Body of pancreas (tissue), 4 donors: ENCODE measurements at regions of chr19 and their contacts with region 1.

Region 1: GRCh38 chr19:46288896-46289588 is 7.8 kb upstream of the HIF3A start:
- DNase-seq: peak in 1 of 4 donors; percentile 33
- ATAC-seq: peak; percentile 42
- H3K4me3 ChIP-seq: no peak overlapping the region
- H3K27ac ChIP-seq: peak overlapping the region in 2 of 4 donors; percentile 3 to 24
- H3K4me1 ChIP-seq: no peaks in the 10 kb centered on the region
- H3K27me3 ChIP-seq: no peaks in the 10 kb centered on the region
- CTCF ChIP-seq: no peak
- POLR2A ChIP-seq: no peak

Region 2: GRCh38 chr19:46346821-46347571 is 58.0 kb after region 1 on chr19 and contains the start of gene PPP5C:
- intact Hi-C with region 1: loop called (anchors 10 kb)
- DNase-seq: peak; percentile 92 to 96 (median 96)
- ATAC-seq: peak; percentile 93
- H3K4me3 ChIP-seq: peak within 1 kb of the TSS; percentile 93 to 96
- H3K27ac ChIP-seq: peak within 1 kb of the TSS; percentile 82 to 90 (median 86)
- H3K4me1 ChIP-seq: peaks cover 52% of the 10 kb centered on the region
- H3K27me3 ChIP-seq: no peaks in the 10 kb centered on the region
- CTCF ChIP-seq: peak; percentile 22 to 93 (median 63)
- POLR2A ChIP-seq: peak; percentile 61 to 84 (median 83)
- total RNA-seq, gene PPP5C: 31.1 to 77.5 TPM

Region 3: DNA sequence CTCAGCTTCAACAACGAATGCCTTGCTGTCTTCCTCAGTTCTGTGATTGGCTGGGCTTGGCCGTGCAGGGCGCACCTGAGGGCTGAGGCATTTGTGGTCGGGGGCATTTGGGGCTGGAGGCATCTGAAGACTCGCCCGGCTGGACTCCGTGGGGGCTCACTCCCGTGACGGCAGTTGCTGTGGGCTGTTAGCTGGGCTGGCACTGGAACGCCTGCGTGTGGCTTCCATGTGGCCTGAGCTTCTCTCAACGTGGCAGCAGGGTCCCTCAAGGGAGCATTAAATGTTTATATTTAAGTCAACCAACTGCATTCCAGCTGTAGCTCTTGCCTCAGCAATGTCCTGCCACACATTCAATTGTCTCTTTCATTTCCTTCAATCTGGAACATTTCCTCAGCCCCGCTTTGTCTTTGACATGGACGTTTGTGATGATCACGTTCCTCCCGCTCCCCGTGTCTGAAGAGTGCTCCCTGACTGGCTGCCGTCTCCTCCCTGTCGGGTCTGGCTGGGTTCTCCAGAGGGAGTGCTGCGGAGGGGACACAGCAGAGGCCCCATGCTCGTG is 103.3 kb after region 1 on chr19:
- intact Hi-C with region 1: loop called (anchors 10 kb)
- DNase-seq: peak in 1 of 4 donors; percentile 4
- ATAC-seq: no peak
- H3K4me3 ChIP-seq: no peak overlapping the region
- H3K27ac ChIP-seq: no peak overlapping the region
- H3K4me1 ChIP-seq: no peaks in the 10 kb centered on the region
- H3K27me3 ChIP-seq: no peaks in the 10 kb centered on the region
- CTCF ChIP-seq: no peak
- POLR2A ChIP-seq: no peak

Region 4: DNA sequence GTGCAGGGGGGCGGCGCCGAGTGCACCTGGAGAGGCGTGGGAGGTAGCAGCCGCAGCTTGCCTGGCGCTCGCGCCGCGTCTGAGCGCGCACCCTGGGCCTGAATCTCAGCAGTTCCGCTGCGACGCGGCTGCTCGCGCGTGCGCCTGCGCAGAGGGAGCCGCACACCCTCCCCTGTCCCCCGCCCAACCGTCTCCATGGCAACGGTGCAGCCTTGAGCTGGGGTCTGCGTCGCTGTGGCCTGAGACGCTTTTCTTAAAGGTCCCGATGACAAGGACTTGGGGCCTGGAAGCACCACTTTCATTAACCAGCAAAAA is 206.7 kb after region 1 on chr19 and contains the start of gene PNMA8B:
- intact Hi-C with region 1: loop called (anchors 10 kb)
- DNase-seq: peak; percentile 64 to 80 (median 79)
- ATAC-seq: peak; percentile 72
- H3K4me3 ChIP-seq: no peak within 1 kb of the TSS
- H3K27ac ChIP-seq: peak within 1 kb of the TSS in 1 of 4 donors; percentile 5
- H3K4me1 ChIP-seq: peaks cover 11% of the 10 kb centered on the region
- H3K27me3 ChIP-seq: no peaks in the 10 kb centered on the region
- CTCF ChIP-seq: no peak
- POLR2A ChIP-seq: peak in 2 of 3 donors; percentile 39 to 45
- total RNA-seq, gene PNMA8B: 2.1 to 2.6 TPM